CD4-positive, alpha-beta memory T cell (primary cell): ENCODE measurements at regions of chr22 and their contacts with region 1.

Region 1: DNA sequence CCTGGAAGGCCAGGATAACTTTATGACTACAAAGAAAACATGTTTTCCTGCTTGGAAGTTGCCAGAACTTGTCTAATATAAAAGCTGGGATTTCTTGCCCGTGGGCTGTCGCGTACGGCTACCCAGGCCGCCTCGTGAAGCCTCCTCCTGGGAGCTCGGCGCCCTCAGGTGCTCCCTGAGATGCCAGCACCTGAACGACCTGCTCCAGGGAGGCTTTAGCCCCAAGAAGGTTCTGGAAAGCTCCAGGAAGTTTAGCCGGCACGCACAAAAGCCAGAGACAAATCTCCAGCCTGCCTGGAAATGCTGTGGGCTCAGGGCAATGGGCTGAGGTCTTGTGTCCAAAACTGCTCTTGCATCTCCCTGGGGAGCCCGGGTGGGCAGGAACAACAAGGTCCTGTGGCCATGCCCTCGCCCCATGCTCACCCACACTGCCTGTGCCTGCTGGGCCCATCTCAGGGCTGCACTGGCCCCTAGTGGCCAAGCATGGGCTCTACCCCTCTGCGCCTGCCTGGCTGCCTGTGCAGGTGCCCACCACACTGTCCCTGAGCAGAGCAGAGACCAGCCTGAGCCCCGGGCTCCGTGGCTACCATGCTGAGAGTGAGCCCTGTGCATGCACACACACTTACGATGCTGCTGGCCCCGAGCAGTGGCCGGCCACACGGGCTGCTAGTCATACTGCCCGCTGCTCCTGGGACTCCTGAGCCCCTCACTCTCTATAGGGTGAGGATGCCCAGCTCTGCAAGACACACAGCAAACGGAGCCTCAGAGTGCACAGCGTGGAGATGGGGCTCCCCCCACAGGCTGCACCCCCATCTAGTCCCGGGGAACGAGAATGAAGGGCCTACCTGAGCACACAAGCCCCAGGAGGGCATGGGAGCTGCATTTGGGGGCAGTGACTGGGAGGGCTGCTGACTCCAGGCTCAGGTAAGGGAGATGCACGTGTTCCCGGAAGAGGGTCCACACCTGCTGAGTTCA is 4.9 kb upstream of the CELSR1 start:
- DNase-seq: peak; percentile 61 to 73 (median 66)
- H3K4me3 ChIP-seq: no peak overlapping the region
- H3K4me3 Mint-ChIP-seq: no peak overlapping the region
- H3K27ac ChIP-seq: no peak overlapping the region
- H3K27ac Mint-ChIP-seq: no peak overlapping the region
- H3K4me1 ChIP-seq: no peaks in the 10 kb centered on the region
- H3K4me1 Mint-ChIP-seq: peaks cover 0 to 13% (median 7%) of the 10 kb centered on the region in 4 donors
- H3K27me3 ChIP-seq: no peaks in the 10 kb centered on the region
- H3K27me3 Mint-ChIP-seq: peaks cover 30 to 36% of the 10 kb centered on the region in 2 donors

Region 2: DNA sequence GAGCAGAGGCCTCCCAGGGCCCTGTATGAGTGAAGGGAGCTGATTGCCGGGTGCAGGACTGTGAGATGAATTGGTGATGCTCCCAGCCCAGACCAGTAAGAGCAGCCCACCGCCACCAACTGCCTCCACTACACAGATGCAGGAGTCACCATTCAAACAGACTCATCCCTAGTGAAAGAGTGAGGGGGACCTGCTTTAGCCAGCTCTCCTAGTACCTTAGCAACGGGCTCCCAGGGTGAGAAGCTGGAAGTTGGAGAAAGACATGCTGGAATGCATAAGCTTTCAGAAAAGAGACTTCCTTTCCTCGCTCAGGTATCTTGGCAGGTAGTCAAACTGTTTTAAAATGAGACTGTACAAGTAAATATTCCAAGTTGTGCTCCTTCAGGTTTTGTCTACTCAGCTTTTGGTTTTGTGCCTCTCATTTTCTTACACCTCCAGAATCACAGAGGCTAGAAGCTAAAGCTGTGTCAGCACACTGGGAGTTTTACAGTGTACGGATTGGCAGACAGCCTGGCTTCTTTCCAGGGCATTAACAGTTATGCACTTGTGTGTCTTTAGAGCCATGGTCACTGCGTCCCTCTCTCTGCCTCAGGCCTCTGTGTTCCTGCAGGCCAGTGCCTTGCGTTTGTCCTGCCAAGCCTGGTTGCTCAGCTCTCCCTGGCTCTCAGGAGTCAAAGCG is 724.4 kb before region 1 on chr22:
- CTCF ChIA-PET with region 1: no interaction called
- POLR2A ChIA-PET with region 1: no interaction called
- intact Hi-C with region 1: no loop called
- DNase-seq: no peak
- H3K4me3 ChIP-seq: no peak overlapping the region
- H3K4me3 Mint-ChIP-seq: no peak overlapping the region
- H3K27ac ChIP-seq: no peak overlapping the region
- H3K27ac Mint-ChIP-seq: peak overlapping the region in 1 of 7 donors; percentile 29
- H3K4me1 ChIP-seq: no peaks in the 10 kb centered on the region
- H3K4me1 Mint-ChIP-seq: peaks cover 0 to 3% (median under 1%) of the 10 kb centered on the region in 4 donors
- H3K27me3 ChIP-seq: no peaks in the 10 kb centered on the region
- H3K27me3 Mint-ChIP-seq: no peaks in the 10 kb centered on the region

Region 3: GRCh38 chr22:45994491-45995404 is 547.5 kb before region 1 on chr22:
- CTCF ChIA-PET with region 1: no interaction called
- POLR2A ChIA-PET with region 1: no interaction called
- intact Hi-C with region 1: loop called (anchors 2 kb)
- DNase-seq: peak; percentile 56 to 71 (median 61)
- H3K4me3 ChIP-seq: no peak overlapping the region
- H3K4me3 Mint-ChIP-seq: no peak overlapping the region
- H3K27ac ChIP-seq: no peak overlapping the region
- H3K27ac Mint-ChIP-seq: no peak overlapping the region
- H3K4me1 ChIP-seq: peaks cover 5% of the 10 kb centered on the region
- H3K4me1 Mint-ChIP-seq: peaks cover 0 to 11% (median 5%) of the 10 kb centered on the region in 4 donors
- H3K27me3 ChIP-seq: no peaks in the 10 kb centered on the region
- H3K27me3 Mint-ChIP-seq: peaks cover 1 to 6% of the 10 kb centered on the region in 2 donors

Region 4: DNA sequence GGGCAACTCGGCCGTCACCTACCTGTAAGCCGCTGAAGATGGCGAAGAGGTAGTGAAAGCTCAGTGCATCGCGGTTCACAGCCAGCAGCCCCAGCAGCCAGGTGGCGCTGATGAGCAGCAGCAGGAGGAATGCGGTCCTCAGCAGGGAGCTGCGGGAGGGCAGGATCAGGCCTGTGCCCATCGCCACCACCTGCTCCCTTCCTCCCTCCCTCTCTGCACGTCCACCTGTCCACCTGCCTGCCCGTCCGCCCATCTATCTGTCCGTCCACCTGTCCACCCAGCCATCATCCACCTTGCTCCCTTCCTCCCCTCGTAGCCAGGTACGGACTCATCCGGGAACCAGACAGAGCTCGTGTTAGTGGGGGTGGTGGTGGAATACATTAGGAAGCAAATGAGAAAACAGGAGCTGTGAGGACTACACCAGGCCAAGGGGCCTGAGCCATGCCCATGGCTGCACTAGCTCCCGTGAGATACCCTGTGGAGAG is 174.5 kb before region 1 on chr22:
- CTCF ChIA-PET with region 1: interaction called, 70 read pairs
- POLR2A ChIA-PET with region 1: no interaction called
- intact Hi-C with region 1: no loop called
- DNase-seq: peak; percentile 49 to 72 (median 58)
- H3K4me3 ChIP-seq: no peak overlapping the region
- H3K4me3 Mint-ChIP-seq: peak overlapping the region in 4 of 8 donors; percentile 25 to 80 (median 48)
- H3K27ac ChIP-seq: no peak overlapping the region
- H3K27ac Mint-ChIP-seq: peak overlapping the region in 4 of 7 donors; percentile 12 to 67 (median 34)
- H3K4me1 ChIP-seq: peaks cover 28% of the 10 kb centered on the region
- H3K4me1 Mint-ChIP-seq: peaks cover 14 to 31% (median 21%) of the 10 kb centered on the region in 4 donors
- H3K27me3 ChIP-seq: no peaks in the 10 kb centered on the region
- H3K27me3 Mint-ChIP-seq: peaks cover 1 to 5% of the 10 kb centered on the region in 2 donors